Mammary epithelial cell (primary cell): ENCODE measurements at regions of chr10 and their contacts with region 1.

Region 1: GRCh38 chr10:6478722-6479121 is 101.4 kb downstream of the PRKCQ start:
- DNase-seq: no peak
- H3K4me3 ChIP-seq: no peak overlapping the region
- H3K27ac ChIP-seq: no peak overlapping the region
- H3K4me1 ChIP-seq: peaks cover 14% of the 10 kb centered on the region
- H3K27me3 ChIP-seq: no peaks in the 10 kb centered on the region
- CTCF ChIP-seq: peak in 1 of 2 donors; percentile 8

Region 2: GRCh38 chr10:4639960-4640359 is 1838.8 kb before region 1 on chr10:
- CTCF ChIA-PET with region 1: no interaction called
- dilution Hi-C with region 1: no loop called
- in situ Hi-C with region 1: no loop called
- intact Hi-C with region 1: no loop called
- DNase-seq: no peak
- H3K4me3 ChIP-seq: no peak overlapping the region
- H3K27ac ChIP-seq: no peak overlapping the region
- H3K4me1 ChIP-seq: peaks cover 13% of the 10 kb centered on the region
- H3K27me3 ChIP-seq: no peaks in the 10 kb centered on the region
- CTCF ChIP-seq: no peak

Region 3: DNA sequence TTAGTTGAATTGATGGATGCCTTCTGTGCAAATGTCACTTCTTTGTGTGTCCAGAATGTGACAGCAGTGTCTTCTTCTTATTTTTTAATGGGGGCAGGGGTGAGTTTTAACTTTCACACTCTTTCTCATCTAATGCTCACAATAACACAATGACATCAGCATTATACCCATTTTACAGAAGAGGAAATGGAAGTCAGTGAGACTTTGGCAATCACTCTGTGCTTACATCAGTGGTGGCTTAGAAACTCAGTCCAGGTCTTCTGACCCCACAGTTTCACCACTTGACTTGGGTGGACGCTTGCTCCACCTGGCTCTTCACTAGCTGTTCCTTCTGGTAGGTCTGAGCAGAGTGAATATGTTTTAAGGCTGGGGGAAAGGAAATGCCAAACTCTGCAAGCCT is 22.7 kb before region 1 on chr10:
- CTCF ChIA-PET with region 1: no interaction called
- dilution Hi-C with region 1: no loop called
- in situ Hi-C with region 1: no loop called
- intact Hi-C with region 1: no loop called
- DNase-seq: no peak
- H3K4me3 ChIP-seq: no peak overlapping the region
- H3K27ac ChIP-seq: no peak overlapping the region
- H3K4me1 ChIP-seq: no peaks in the 10 kb centered on the region
- H3K27me3 ChIP-seq: no peaks in the 10 kb centered on the region
- CTCF ChIP-seq: no peak

Region 4: GRCh38 chr10:6525666-6526065 is 46.9 kb after region 1 on chr10:
- CTCF ChIA-PET with region 1: no interaction called
- dilution Hi-C with region 1: loop called (anchors 5 kb)
- in situ Hi-C with region 1: no loop called
- intact Hi-C with region 1: no loop called
- DNase-seq: no peak
- H3K4me3 ChIP-seq: no peak overlapping the region
- H3K27ac ChIP-seq: no peak overlapping the region
- H3K4me1 ChIP-seq: peaks cover 5% of the 10 kb centered on the region
- H3K27me3 ChIP-seq: no peaks in the 10 kb centered on the region
- CTCF ChIP-seq: no peak